Panc1 (cell line): ENCODE measurements at regions of chr20 and their contacts with region 1.

Region 1: DNA sequence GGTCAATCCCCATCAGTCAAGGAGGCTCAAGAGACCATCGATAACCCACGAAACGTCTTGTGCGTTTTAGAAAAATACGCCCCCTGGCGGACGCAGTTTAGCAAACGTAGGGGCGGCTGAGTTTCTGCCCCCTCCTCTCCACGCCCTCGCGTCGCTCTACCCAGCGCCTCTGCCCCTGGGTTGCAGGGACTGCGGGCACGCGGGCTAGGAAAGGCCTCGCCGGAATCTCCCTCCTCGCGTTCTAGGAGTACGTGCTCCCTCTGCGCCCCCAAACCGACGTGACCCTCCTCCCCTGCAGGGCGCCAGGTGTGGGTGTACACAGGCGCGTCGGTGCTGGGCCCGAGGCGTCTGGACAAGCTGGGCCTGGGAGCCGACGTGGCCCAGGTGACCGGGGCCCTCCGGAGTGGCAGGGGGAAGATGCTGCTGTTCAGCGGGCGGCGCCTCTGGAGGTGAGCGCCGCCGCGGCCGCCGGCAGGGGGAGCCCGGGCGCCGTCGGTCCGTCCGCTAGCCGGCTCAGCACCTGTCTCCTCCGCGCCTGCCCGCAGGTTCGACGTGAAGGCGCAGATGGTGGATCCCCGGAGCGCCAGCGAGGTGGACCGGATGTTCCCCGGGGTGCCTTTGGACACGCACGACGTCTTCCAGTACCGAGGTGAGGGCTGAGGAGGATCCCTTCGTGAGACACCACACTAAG is 5.3 kb downstream of the MMP9 start:
- DNase-seq: no peak
- ATAC-seq: peak; percentile 93
- H3K4me3 ChIP-seq: peak overlapping the region; percentile 27 to 48
- H3K27ac ChIP-seq: no peak overlapping the region
- H3K4me1 ChIP-seq: no peaks in the 10 kb centered on the region; the same call in 1 of the 2 replicates
- H3K27me3 ChIP-seq: peaks cover 2% of the 10 kb centered on the region; the same call in 1 of the 2 replicates
- CTCF ChIP-seq: peak; percentile 99

Region 2: GRCh38 chr20:45555198-45555597 is 458.8 kb before region 1 on chr20:
- CTCF ChIA-PET with region 1: no interaction called
- POLR2A ChIA-PET with region 1: no interaction called
- in situ Hi-C with region 1: no loop called
- intact Hi-C with region 1: no loop called
- DNase-seq: no peak
- ATAC-seq: no peak
- H3K4me3 ChIP-seq: no peak overlapping the region
- H3K27ac ChIP-seq: no peak overlapping the region
- H3K4me1 ChIP-seq: no peaks in the 10 kb centered on the region
- H3K27me3 ChIP-seq: peaks cover 5% of the 10 kb centered on the region
- CTCF ChIP-seq: no peak

Region 3: DNA sequence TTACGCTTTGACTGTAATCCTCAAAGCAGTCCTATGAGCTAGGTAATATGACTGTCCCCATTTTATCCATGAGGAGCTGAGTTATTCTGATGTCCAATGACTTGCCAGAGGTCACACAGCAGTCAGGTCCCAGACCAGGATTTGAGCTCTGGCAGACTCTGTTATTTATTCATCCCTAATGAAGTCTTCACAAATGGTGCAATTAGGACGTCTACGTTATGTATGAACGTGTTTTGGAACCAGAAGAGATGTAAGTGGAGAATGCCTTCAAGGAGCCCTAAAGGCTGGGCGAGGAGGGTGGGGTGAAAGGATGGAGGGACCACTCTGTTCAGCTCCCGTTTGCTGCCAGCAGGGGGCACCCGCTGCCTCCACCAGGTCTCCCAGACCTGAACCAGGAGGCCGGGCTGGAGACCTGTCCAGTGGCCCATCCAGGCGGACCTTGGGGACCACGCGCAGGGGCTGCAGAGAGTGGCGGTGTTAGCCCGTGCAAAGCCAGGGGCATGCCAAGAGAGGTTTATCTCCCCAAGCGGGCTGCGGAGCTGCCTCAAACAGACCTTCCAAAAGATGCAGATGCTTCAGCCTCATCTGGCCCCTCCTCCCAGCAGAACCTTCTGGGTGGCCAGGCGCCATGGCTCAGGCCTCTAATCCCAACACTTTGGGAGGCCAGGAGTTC is 26.7 kb before region 1 on chr20:
- CTCF ChIA-PET with region 1: interaction called, 32 read pairs
- POLR2A ChIA-PET with region 1: no interaction called
- in situ Hi-C with region 1: no loop called
- intact Hi-C with region 1: no loop called
- DNase-seq: no peak
- ATAC-seq: peak; percentile 98
- H3K4me3 ChIP-seq: no peak overlapping the region
- H3K27ac ChIP-seq: no peak overlapping the region
- H3K4me1 ChIP-seq: peaks cover 2% of the 10 kb centered on the region; the same call in 1 of the 2 replicates
- H3K27me3 ChIP-seq: no peaks in the 10 kb centered on the region
- CTCF ChIP-seq: peak; percentile 96

Region 4: DNA sequence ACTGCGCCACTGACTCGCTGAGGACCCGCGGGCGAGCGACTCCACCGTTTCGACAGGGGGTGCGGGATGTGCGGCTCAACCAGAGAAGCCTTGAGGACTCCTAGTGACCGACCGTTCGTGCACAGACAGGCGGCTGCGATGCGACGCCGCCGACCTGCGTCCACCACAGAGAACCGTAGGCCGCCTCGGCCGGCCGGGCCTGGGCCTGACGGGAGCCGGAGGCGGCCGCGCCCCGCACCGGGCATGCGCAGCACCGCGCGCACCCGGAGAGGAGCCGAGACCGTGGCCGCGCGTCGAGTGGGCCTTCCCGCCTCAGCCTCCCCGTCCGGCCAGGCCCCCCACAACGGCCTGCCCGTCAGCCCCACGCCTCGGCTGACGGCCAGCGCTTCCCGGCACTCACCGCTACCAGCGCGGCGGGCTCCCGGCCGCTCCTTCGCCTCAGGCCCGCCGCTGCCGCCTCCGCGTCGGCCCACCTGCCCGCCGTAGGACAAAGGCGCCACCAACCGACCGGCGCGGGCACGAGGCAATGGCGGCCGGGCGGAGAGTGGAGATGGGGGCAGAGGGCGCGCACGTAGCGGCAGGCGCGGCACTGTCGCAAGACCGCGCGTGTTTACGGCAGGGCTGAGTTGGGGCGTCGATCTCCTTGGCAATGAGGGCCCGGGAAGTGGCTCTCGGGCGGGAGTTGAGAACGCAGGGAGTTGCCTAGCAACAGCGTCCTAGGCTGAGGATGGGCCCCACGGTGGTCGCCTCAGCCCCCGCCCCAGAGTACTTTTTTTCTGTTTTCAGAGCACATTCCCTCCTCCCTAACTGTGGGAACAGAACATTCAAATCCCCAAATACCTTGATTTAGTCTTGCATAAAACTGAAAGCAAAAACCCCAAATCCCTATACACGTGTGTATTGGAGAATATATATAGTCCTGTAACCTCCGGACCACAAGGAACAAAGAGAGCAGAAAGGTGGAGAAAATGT is 75.7 kb after region 1 on chr20 and contains the start of gene NCOA5:
- CTCF ChIA-PET with region 1: interaction called, 3 read pairs
- POLR2A ChIA-PET with region 1: no interaction called
- in situ Hi-C with region 1: no loop called
- intact Hi-C with region 1: loop called (anchors 2 kb)
- DNase-seq: peak; percentile 60
- ATAC-seq: peak; percentile 96
- H3K4me3 ChIP-seq: peak within 1 kb of the TSS; percentile 84 to 92
- H3K27ac ChIP-seq: peak within 1 kb of the TSS; percentile 86
- H3K4me1 ChIP-seq: peaks cover 42% of the 10 kb centered on the region
- H3K27me3 ChIP-seq: no peaks in the 10 kb centered on the region
- CTCF ChIP-seq: peak; percentile 66
- total RNA-seq, gene NCOA5: 30.6 TPM